BJ (cell line): ENCODE measurements at regions of chr10 and their contacts with region 1.

Region 1: GRCh38 chr10:102399217-102400089 is 3.9 kb downstream of the NFKB2 start:
- DNase-seq: no peak
- H3K4me3 ChIP-seq: peak overlapping the region; percentile 48
- H3K27me3 ChIP-seq: no peaks in the 10 kb centered on the region
- CTCF ChIP-seq: peak; percentile 86

Region 2: GRCh38 chr10:102113261-102113955 is 286.0 kb before region 1 on chr10:
- CTCF ChIA-PET with region 1: interaction called, 3 read pairs
- POLR2A ChIA-PET with region 1: interaction called, 23 read pairs
- DNase-seq: no peak
- H3K4me3 ChIP-seq: peak overlapping the region; percentile 73
- H3K27me3 ChIP-seq: no peaks in the 10 kb centered on the region
- CTCF ChIP-seq: no peak

Region 3: GRCh38 chr10:102492983-102493382 is 93.5 kb after region 1 on chr10:
- CTCF ChIA-PET with region 1: no interaction called
- POLR2A ChIA-PET with region 1: no interaction called
- DNase-seq: no peak
- H3K4me3 ChIP-seq: no peak overlapping the region
- H3K27me3 ChIP-seq: no peaks in the 10 kb centered on the region
- CTCF ChIP-seq: no peak